Posterior vena cava (tissue), 2 donors: ENCODE measurements at regions of chr1 and their contacts with region 1.

Region 1: GRCh38 chr1:103309786-103310185 is 201.5 kb upstream of the COL11A1 start:
- DNase-seq: no peak

Region 2: GRCh38 chr1:102715150-102715549 is 594.6 kb before region 1 on chr1:
- intact Hi-C with region 1: loop called in 1 of 2 experiments (anchors 5 kb)
- DNase-seq: no peak

Region 3: GRCh38 chr1:103283841-103284669 is 25.7 kb before region 1 on chr1:
- intact Hi-C with region 1: no loop called
- DNase-seq: no peak